HepG2 (cell line): ENCODE measurements at regions of chr15 and their contacts with region 1.

Region 1: GRCh38 chr15:89087830-89088604 is at the start of gene ABHD2:
- DNase-seq: peak; percentile 100
- ATAC-seq: peak; percentile 98
- H3K4me3 ChIP-seq: peak within 1 kb of the TSS; percentile 69 to 94 (median 84)
- H3K27ac ChIP-seq: peak within 1 kb of the TSS; percentile 49
- H3K4me1 ChIP-seq: peaks cover 77% of the 10 kb centered on the region
- H3K27me3 ChIP-seq: no peaks in the 10 kb centered on the region
- CTCF ChIP-seq: no peak; the same call in 1 of the 2 replicates
- EP300 ChIP-seq: no peak
- POLR2A ChIP-seq: peak; percentile 57 to 75
- RAD21 ChIP-seq: peak; percentile 42
- total RNA-seq, gene ABHD2: 12.2 and 22.4 TPM in 2 replicates

Region 2: DNA sequence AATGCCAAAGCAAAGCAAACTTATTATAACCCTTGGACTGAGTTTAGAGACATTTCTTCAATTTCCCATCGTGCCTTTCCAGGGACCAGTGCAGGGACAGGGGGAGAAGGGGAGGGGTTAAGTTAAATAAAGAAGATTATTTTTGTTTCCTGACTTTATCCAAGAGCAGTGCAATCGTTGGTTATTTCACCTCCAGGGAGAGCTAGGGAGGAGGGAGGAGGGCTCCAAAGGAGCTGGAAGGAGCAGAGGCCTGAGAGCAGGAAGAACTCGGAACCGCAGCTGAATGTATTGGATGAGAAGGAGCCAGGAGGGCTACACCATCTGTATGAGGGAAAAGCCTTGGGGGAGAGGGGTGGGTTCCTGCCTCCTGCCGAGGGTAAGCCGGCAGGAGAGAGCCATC is 213.3 kb before region 1 on chr15:
- CTCF ChIA-PET with region 1: no interaction called
- POLR2A ChIA-PET with region 1: no interaction called
- in situ Hi-C with region 1: no loop called
- intact Hi-C with region 1: no loop called
- DNase-seq: no peak
- ATAC-seq: no peak
- H3K4me3 ChIP-seq: no peak overlapping the region
- H3K27ac ChIP-seq: no peak overlapping the region
- H3K4me1 ChIP-seq: no peaks in the 10 kb centered on the region
- H3K27me3 ChIP-seq: peaks cover 18 to 75% of the 10 kb centered on the region in 2 experiments
- CTCF ChIP-seq: no peak
- EP300 ChIP-seq: no peak
- POLR2A ChIP-seq: no peak
- RAD21 ChIP-seq: no peak

Region 3: DNA sequence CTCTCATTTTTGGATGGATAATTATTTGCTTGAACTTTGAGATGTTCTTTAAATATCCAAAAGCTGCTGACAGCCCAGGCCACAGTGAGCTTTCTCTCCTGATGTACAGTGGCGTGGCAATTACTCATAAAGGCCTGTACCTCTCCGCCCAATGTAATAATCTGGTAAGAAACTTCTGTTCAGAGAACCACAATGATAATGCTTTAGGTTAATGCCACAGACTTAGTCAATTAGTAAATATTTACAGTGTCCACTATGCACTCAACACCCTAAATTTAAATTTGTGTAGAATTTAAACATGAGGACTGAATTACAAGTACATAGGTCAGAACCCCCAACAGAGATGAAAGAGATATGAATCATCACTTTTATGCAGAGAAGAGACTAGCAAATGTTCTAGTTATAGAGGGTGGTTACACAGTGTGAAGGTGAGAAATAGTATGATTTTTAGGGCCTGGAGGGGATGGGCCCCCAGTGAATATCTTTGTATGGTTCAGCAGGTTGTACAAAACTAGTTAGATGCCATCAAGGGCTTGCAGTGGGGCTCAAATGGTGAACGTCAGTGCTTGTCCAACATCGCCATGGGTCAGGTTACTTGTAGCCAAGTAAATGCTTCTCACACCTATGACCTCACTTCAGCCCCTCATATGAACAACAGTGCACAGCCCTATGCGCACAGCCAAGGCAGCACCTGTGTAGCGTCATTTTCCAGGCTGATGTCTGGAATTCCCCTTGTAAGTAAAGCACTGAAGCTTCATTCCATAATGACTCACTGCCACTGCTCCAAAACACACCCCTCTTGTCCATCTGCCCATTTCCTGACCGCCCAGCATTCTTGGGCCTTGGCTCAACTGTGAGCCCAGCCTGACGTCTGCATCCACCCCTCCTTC is 13.5 kb after region 1 on chr15:
- CTCF ChIA-PET with region 1: no interaction called
- POLR2A ChIA-PET with region 1: interaction called, 38 read pairs
- in situ Hi-C with region 1: no loop called
- intact Hi-C with region 1: no loop called
- DNase-seq: peak; percentile 45
- ATAC-seq: peak; percentile 70
- H3K4me3 ChIP-seq: no peak overlapping the region
- H3K27ac ChIP-seq: peak overlapping the region; percentile 21
- H3K4me1 ChIP-seq: peaks cover 60% of the 10 kb centered on the region
- H3K27me3 ChIP-seq: no peaks in the 10 kb centered on the region
- CTCF ChIP-seq: no peak
- EP300 ChIP-seq: peak in 1 of 2 experiments; percentile 40; a peak in 1 of 4 replicates
- POLR2A ChIP-seq: no peak
- RAD21 ChIP-seq: no peak

Region 4: GRCh38 chr15:89119489-89120123 is 31.6 kb after region 1 on chr15:
- CTCF ChIA-PET with region 1: no interaction called
- POLR2A ChIA-PET with region 1: interaction called, 13 read pairs
- in situ Hi-C with region 1: no loop called
- intact Hi-C with region 1: no loop called
- DNase-seq: peak; percentile 45
- ATAC-seq: no peak
- H3K4me3 ChIP-seq: no peak overlapping the region
- H3K27ac ChIP-seq: peak overlapping the region; percentile 90
- H3K4me1 ChIP-seq: peaks cover 96% of the 10 kb centered on the region
- H3K27me3 ChIP-seq: no peaks in the 10 kb centered on the region
- CTCF ChIP-seq: no peak
- EP300 ChIP-seq: no peak
- POLR2A ChIP-seq: no peak
- RAD21 ChIP-seq: no peak

Region 5: DNA sequence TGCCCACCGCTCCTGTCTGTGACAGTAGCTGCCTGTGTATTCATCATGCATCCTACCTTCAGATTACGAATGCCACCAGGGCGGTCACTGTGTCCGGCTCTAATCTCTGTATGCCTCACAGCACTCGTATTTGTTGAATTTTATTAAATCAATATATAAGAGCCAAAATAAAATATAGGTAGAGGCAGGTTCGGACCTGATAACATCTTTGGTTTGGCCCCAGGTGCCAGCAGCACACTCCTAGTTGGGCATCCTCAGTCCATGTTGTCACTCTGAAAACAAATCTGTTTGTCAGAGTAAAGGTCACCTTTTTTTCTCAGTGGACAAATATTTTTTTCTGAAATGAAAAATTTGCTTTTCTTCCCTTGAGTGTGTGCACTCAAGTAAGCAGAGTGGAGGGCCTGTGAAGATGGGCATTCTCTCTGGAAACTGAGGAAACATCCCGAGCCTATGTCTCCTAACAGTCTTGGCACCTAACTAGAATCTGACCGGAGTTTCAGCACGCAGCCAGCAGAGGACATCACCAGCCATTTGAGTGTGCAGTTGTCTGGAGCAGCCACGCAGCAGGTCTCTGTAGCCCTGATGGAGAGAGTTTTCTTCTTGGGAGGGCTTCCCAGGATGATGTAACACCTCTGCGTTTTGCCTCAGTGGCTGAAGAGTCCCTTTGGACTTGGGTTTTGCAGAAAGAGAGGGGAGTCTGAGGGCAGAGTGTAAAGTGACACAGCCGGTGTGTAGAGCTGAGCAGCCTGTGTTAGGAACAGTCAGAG is 51.6 kb after region 1 on chr15:
- CTCF ChIA-PET with region 1: no interaction called
- POLR2A ChIA-PET with region 1: interaction called, 21 read pairs
- in situ Hi-C with region 1: no loop called
- intact Hi-C with region 1: loop called (anchors 1 kb)
- DNase-seq: peak; percentile 62
- ATAC-seq: peak; percentile 63
- H3K4me3 ChIP-seq: peak overlapping the region in 1 of 3 experiments; percentile 50; a peak in 3 of 6 replicates
- H3K27ac ChIP-seq: peak overlapping the region; percentile 90
- H3K4me1 ChIP-seq: peaks cover 82% of the 10 kb centered on the region
- H3K27me3 ChIP-seq: no peaks in the 10 kb centered on the region
- CTCF ChIP-seq: peak; percentile 45
- EP300 ChIP-seq: peak in 1 of 2 experiments; percentile 72; a peak in 1 of 4 replicates
- POLR2A ChIP-seq: no peak; a peak in 1 of 4 replicates
- RAD21 ChIP-seq: peak; percentile 26; the same call in 1 of the 2 replicates

Region 6: DNA sequence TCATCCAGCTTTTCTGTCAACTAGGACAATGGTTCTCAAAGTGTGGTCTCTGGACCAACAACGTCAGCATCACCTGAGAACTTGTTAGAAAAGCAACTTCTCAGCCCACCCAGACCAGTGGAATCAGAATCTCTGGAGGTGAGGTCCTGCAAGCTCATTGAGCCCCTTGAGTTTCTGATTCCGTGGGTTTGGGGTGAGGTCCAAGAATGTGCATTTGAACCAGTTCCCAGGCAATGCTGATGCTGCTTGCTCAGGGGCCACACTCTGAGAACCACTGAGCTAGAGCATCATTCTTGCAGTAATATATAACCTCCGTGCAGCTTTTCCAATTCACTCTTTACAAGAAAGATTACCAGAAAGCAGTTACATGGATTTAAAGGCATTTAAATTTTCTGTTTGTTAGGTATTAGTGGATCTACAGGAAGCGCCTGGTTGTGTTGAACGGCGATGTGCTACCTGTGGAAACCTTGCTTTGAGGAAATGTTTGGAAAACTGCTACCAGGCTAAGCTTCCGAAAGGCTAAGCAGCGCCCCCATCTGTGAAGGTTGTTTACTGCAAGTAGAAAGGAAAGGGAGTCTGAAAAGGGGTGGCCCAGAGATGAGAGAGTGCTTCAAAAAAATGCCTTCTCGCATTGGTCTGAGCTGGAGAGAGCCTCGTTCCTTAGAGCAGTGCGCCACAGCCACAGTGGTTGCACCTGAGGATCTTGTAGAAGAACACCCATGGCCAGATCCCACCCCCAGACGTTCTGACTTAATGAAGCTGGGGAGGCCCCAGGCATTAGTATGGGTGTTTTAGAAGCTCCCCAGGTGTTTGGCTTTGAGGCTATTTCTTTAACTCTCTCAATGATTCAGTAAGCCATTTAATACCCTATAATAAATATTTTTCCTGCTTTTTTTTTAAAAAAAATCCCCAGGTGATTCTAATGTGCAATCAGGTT is 83.4 kb after region 1 on chr15:
- CTCF ChIA-PET with region 1: no interaction called
- POLR2A ChIA-PET with region 1: interaction called, 10 read pairs
- in situ Hi-C with region 1: no loop called
- intact Hi-C with region 1: no loop called
- DNase-seq: peak; percentile 62
- ATAC-seq: peak; percentile 83
- H3K4me3 ChIP-seq: no peak overlapping the region
- H3K27ac ChIP-seq: no peak overlapping the region
- H3K4me1 ChIP-seq: peaks cover 32% of the 10 kb centered on the region
- H3K27me3 ChIP-seq: no peaks in the 10 kb centered on the region
- CTCF ChIP-seq: peak; percentile 87
- EP300 ChIP-seq: no peak
- POLR2A ChIP-seq: no peak
- RAD21 ChIP-seq: peak; percentile 84